ENCODE measurements at regions of chr10 and their contacts with region 1.

Region 1: GRCh38 chr10:60208676-60209269 is 180.9 kb downstream of the ANK3 start:
- DNase-seq: no peak

Region 2: GRCh38 chr10:60099998-60100747 is 108.6 kb before region 1 on chr10:
- intact Hi-C with region 1: loop called (anchors 2 kb)
- DNase-seq: no peak

Region 3: GRCh38 chr10:60114765-60115586 is 93.8 kb before region 1 on chr10:
- intact Hi-C with region 1: loop called (anchors 5 kb)
- DNase-seq: no peak

Region 4: GRCh38 chr10:60434418-60435046 is 225.8 kb after region 1 on chr10:
- intact Hi-C with region 1: loop called (anchors 1 kb)
- DNase-seq: peak in 3 of 10 donors; percentile 38 to 56 (median 53)

Region 5: GRCh38 chr10:60646966-60647796 is 438.4 kb after region 1 on chr10:
- intact Hi-C with region 1: loop called (anchors 10 kb)
- DNase-seq: peak in 2 of 10 donors; percentile 17 to 26